Ovary (tissue), 10 donors: ENCODE measurements at regions of chr10 and their contacts with region 1.

Region 1: DNA sequence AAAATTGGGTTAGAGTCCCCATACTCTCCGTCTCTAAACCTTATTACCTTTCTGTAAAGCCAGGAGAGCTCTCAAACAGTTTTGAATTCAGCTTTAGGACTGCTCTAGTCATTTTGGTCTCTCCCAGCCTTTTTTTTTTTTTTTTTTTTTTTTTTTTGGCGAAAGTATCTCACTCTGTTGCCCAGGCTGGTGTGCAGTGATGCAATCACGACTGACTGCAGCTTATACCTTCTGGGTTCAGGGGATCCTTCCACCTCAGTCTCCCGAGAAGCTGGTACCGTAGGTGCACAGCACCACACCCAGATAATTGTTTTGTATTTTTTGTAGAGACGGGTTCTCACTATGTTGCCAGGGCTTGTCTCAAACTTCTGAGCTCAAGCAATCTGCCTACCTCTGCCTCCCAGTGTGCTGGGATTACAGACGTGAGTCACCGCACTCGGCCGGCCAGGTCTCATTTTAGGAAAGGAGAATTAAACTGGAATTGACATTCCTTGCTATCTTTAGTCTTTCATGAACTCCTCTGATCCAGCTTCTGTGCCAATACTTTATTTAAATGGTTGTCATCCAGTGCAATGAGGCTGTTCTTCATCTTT is 31.4 kb upstream of the RSU1 start:
- DNase-seq: no peak
- H3K4me3 ChIP-seq: no peak overlapping the region
- H3K27ac ChIP-seq: no peak overlapping the region
- H3K4me1 ChIP-seq: peaks cover 3% of the 10 kb centered on the region
- H3K27me3 ChIP-seq: no peaks in the 10 kb centered on the region
- CTCF ChIP-seq: no peak
- EP300 ChIP-seq: no peak
- POLR2A ChIP-seq: no peak

Region 2: GRCh38 chr10:16700331-16700730 is 148.3 kb before region 1 on chr10:
- intact Hi-C with region 1: no loop called
- DNase-seq: no peak
- H3K4me3 ChIP-seq: no peak overlapping the region
- H3K27ac ChIP-seq: no peak overlapping the region
- H3K4me1 ChIP-seq: no peaks in the 10 kb centered on the region
- H3K27me3 ChIP-seq: no peaks in the 10 kb centered on the region
- CTCF ChIP-seq: no peak
- EP300 ChIP-seq: no peak
- POLR2A ChIP-seq: no peak

Region 3: GRCh38 chr10:16777473-16778370 is 70.9 kb before region 1 on chr10:
- intact Hi-C with region 1: no loop called
- DNase-seq: peak; percentile 34 to 43 (median 39)
- H3K4me3 ChIP-seq: no peak overlapping the region
- H3K27ac ChIP-seq: peak overlapping the region in 1 of 2 donors; percentile 57
- H3K4me1 ChIP-seq: peaks cover 5% of the 10 kb centered on the region
- H3K27me3 ChIP-seq: no peaks in the 10 kb centered on the region
- CTCF ChIP-seq: peak; percentile 43 to 80 (median 58)
- EP300 ChIP-seq: no peak
- POLR2A ChIP-seq: no peak

Region 4: GRCh38 chr10:17257466-17258321 is 409.0 kb after region 1 on chr10:
- intact Hi-C with region 1: loop called in 2 of 4 experiments (anchors 5 kb)
- DNase-seq: peak in 4 of 5 donors; percentile 40 to 74 (median 46)
- H3K4me3 ChIP-seq: no peak overlapping the region
- H3K27ac ChIP-seq: peak overlapping the region in 1 of 2 donors; percentile 65
- H3K4me1 ChIP-seq: no peaks in the 10 kb centered on the region
- H3K27me3 ChIP-seq: no peaks in the 10 kb centered on the region
- CTCF ChIP-seq: peak; percentile 70 to 82 (median 77)
- EP300 ChIP-seq: no peak
- POLR2A ChIP-seq: no peak